PC-9 (cell line): ENCODE measurements at regions of chr17 and their contacts with region 1.

Region 1: GRCh38 chr17:49132699-49133364 is at the start of gene B4GALNT2:
- DNase-seq: peak in 1 of 2 experiments; percentile 22
- H3K4me3 ChIP-seq: no peak within 1 kb of the TSS
- H3K27ac ChIP-seq: no peak within 1 kb of the TSS
- H3K4me1 ChIP-seq: no peaks in the 10 kb centered on the region
- H3K27me3 ChIP-seq: peaks cover 34% of the 10 kb centered on the region
- CTCF ChIP-seq: no peak
- total RNA-seq, gene B4GALNT2: 0.10 TPM in 1 of 2 replicates, not detected in the other

Region 2: GRCh38 chr17:48841395-48841831 is 291.4 kb before region 1 on chr17:
- CTCF ChIA-PET with region 1: no interaction called
- POLR2A ChIA-PET with region 1: no interaction called
- intact Hi-C with region 1: no loop called
- DNase-seq: no peak
- H3K4me3 ChIP-seq: no peak overlapping the region
- H3K27ac ChIP-seq: no peak overlapping the region
- H3K4me1 ChIP-seq: peaks cover 1% of the 10 kb centered on the region
- H3K27me3 ChIP-seq: no peaks in the 10 kb centered on the region
- CTCF ChIP-seq: no peak

Region 3: GRCh38 chr17:49022391-49022941 is 110.4 kb before region 1 on chr17:
- CTCF ChIA-PET with region 1: no interaction called
- POLR2A ChIA-PET with region 1: no interaction called
- intact Hi-C with region 1: no loop called
- DNase-seq: peak in 1 of 2 experiments; percentile 58
- H3K4me3 ChIP-seq: no peak overlapping the region
- H3K27ac ChIP-seq: peak overlapping the region; percentile 58; the same call in 1 of the 2 replicates
- H3K4me1 ChIP-seq: peaks cover 26% of the 10 kb centered on the region
- H3K27me3 ChIP-seq: no peaks in the 10 kb centered on the region
- CTCF ChIP-seq: no peak

Region 4: DNA sequence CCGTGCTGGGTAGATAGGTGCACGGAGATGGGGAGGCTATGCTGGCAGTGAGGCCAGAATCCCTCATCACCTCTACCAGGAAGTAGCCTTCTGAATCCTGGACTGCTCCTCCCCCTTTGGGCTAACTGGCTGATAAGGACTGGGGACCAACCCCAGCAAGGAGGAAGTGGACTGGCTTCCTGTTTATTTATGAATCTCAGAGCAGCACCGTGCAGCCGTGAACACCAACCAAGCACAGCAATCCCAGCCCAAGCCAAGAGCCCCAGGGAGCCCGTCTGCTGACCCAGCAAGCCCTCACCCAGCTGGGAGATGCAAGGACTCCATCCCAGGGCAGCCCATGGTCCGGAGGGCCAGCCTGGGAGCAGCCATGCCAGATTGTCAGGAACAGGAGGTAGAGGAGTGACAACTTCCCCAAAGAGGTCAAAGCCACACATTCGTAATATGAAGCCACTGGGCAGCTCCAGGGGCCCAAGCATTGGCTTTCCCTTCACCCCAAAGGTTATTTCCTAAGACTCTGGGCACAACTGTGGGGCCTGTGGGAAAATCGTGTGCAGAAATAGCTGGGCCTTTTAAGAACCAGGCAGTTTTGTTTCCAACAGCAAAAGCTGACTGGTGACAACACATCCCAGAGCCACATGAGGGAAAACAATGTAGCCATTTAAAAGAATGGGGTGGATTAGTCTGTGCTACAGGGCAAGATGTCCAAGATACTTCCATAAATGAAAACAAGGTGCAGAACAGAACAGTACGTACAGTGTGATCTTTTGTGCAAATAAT is 257.9 kb after region 1 on chr17:
- CTCF ChIA-PET with region 1: interaction called, 11 read pairs
- POLR2A ChIA-PET with region 1: no interaction called
- intact Hi-C with region 1: no loop called
- DNase-seq: peak; percentile 45 to 86
- H3K4me3 ChIP-seq: peak overlapping the region; percentile 43; the same call in 1 of the 2 replicates
- H3K27ac ChIP-seq: peak overlapping the region; percentile 50
- H3K4me1 ChIP-seq: peaks cover 31% of the 10 kb centered on the region
- H3K27me3 ChIP-seq: no peaks in the 10 kb centered on the region
- CTCF ChIP-seq: no peak